ENCODE measurements at regions of chr18 and their contacts with region 1.

Region 1: DNA sequence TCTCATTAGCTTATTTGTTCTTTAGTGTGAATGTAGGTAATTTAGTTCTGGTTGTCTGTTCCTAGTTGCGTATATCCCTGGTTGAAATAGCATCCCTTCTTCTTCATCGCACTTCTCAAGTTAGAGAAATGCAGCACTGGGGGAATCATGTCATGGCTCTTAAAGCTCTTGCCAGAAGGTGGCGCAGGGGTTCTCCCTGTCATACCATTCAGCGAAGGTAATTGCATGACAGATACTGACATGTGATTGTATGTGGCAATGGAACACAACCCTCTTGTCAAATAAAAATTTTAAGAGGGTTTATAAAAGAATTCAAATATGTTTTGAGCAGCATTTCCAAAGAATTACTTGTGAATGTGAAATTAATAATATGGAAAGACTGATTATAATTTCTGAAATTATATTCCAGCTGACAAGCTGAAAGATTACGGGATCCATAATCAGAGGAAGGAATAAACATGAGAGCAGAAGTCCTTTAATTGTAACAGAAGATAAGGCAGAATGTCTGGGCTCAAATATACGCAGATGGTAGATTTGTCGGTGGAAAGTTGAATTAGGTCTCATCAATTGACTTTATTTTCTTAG is 411.7 kb downstream of the DSEL start:
- DNase-seq: peak; percentile 6 to 25
- ATAC-seq: peak in 1 of 2 donors; percentile 73
- H3K4me3 ChIP-seq: no peak overlapping the region
- H3K27ac ChIP-seq: no peak overlapping the region
- H3K4me1 ChIP-seq: no peaks in the 10 kb centered on the region
- H3K27me3 ChIP-seq: no peaks in the 10 kb centered on the region
- CTCF ChIP-seq: peak in 2 of 5 experiments; percentile 35 to 43
- POLR2A ChIP-seq: no peak

Region 2: GRCh38 chr18:67199993-67200617 is 95.3 kb after region 1 on chr18:
- in situ Hi-C with region 1: loop called in 1 of 4 experiments (anchors 10 kb)
- intact Hi-C with region 1: loop called (anchors 1 kb)
- DNase-seq: no peak
- ATAC-seq: no peak
- H3K4me3 ChIP-seq: no peak overlapping the region
- H3K27ac ChIP-seq: no peak overlapping the region
- H3K4me1 ChIP-seq: no peaks in the 10 kb centered on the region
- H3K27me3 ChIP-seq: no peaks in the 10 kb centered on the region
- CTCF ChIP-seq: peak in 4 of 5 experiments; percentile 12 to 52 (median 40)
- POLR2A ChIP-seq: no peak